Cardiac septum (tissue), 1 donor: ENCODE measurements at regions of chr6 and their contacts with region 1.

Region 1: GRCh38 chr6:135535989-135536414 is 38.5 kb upstream of the AHI1 start:
- DNase-seq: no peak

Region 2: DNA sequence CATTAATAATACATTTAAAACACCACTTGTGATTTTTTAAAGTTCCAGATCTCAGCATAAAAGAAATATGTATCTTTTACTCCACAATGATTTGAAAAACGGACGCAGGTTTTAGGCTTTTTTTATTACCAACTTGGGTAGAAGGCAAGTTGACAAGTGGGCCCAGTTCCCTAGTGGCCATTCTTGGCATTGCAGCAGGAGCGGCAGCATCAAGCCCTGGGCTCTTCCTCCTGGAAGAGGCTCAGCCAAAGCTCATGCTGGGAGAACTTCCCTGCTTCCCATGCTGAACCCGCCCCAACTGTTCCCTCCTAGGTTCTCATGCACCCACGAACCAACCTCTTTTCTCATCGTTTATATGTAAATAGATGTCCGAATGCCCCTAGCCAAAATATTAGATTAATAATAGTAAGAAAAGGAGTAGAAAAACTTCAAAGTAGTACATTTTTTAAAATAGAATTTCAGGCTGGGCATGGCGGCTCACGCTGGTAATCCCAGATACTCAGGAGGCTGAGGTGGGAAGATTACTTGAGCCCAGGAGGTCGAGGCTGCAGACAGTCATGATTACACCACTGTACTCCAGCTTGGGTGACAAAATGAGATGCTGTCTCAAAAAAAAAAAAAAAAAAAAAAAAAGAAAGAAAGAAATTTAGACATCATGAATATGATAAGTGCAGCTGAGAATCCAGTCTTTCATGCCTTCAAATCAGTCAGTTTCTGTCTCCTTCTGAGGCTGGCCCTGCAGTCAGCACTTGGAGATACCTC is 373.1 kb before region 1 on chr6:
- intact Hi-C with region 1: no loop called
- DNase-seq: no peak

Region 3: GRCh38 chr6:135909737-135910387 is 373.9 kb after region 1 on chr6:
- intact Hi-C with region 1: loop called (anchors 10 kb)
- DNase-seq: no peak

Region 4: DNA sequence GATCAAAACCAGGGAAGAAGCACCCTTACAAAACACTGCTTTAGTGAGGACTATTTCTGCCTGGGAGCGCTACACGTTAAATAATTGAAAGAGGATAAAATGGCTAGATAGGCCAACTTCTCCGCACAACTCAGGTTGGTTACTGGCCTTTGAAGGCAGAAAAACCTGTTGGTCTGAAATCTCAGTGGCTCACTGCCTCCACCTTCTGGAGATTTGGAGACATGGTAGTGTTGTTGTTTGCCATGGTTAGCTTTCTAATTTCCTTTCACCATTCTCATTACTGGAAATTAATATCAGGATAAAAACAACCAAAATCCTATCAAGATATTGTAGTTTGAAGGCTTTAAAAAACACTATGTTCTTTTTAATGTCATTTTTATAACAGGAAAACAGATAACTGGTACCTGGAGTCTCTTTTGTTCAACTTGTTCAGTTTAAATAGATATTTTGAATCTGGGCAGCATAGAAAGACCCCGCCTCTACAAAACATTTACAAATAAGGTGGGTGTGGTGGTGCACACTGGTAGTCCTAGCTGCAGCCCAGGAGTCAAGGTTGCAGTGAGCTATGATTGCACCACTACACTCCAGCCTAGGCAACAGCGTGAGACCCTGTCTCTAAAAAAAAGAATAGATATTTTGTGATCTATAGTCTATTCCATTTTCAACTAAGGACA is 781.2 kb after region 1 on chr6:
- intact Hi-C with region 1: loop called (anchors 10 kb)
- DNase-seq: no peak